CD8-positive, alpha-beta memory T cell (primary cell): ENCODE measurements at regions of chr12 and their contacts with region 1.

Region 1: GRCh38 chr12:69879041-69879960 is 54.3 kb downstream of the MYRFL start:
- DNase-seq: peak; percentile 37 to 67 (median 39)
- H3K4me3 ChIP-seq: no peak overlapping the region
- H3K4me3 Mint-ChIP-seq: no peak overlapping the region
- H3K27ac ChIP-seq: no peak overlapping the region
- H3K27ac Mint-ChIP-seq: peak overlapping the region in 2 of 8 donors; percentile 28 to 36
- H3K4me1 ChIP-seq: no peaks in the 10 kb centered on the region
- H3K4me1 Mint-ChIP-seq: peaks cover 3 to 9% (median 6%) of the 10 kb centered on the region in 3 donors
- H3K27me3 ChIP-seq: no peaks in the 10 kb centered on the region
- H3K27me3 Mint-ChIP-seq: peaks cover 11 to 44% of the 10 kb centered on the region in 2 donors

Region 2: GRCh38 chr12:69708649-69709048 is 170.7 kb before region 1 on chr12:
- CTCF ChIA-PET with region 1: no interaction called
- POLR2A ChIA-PET with region 1: no interaction called
- DNase-seq: no peak
- H3K4me3 ChIP-seq: no peak overlapping the region
- H3K4me3 Mint-ChIP-seq: no peak overlapping the region
- H3K27ac ChIP-seq: no peak overlapping the region
- H3K27ac Mint-ChIP-seq: no peak overlapping the region
- H3K4me1 ChIP-seq: no peaks in the 10 kb centered on the region
- H3K4me1 Mint-ChIP-seq: no peaks in the 10 kb centered on the region
- H3K27me3 ChIP-seq: no peaks in the 10 kb centered on the region
- H3K27me3 Mint-ChIP-seq: peaks cover 10 to 50% of the 10 kb centered on the region in 2 donors

Region 3: GRCh38 chr12:70576346-70577282 is 697.3 kb after region 1 on chr12:
- CTCF ChIA-PET with region 1: interaction called, 15 read pairs
- POLR2A ChIA-PET with region 1: no interaction called
- DNase-seq: peak in 2 of 5 donors; percentile 22 to 35
- H3K4me3 ChIP-seq: no peak overlapping the region
- H3K4me3 Mint-ChIP-seq: no peak overlapping the region
- H3K27ac ChIP-seq: no peak overlapping the region
- H3K27ac Mint-ChIP-seq: no peak overlapping the region
- H3K4me1 ChIP-seq: no peaks in the 10 kb centered on the region
- H3K4me1 Mint-ChIP-seq: no peaks in the 10 kb centered on the region
- H3K27me3 ChIP-seq: no peaks in the 10 kb centered on the region
- H3K27me3 Mint-ChIP-seq: peaks cover 5 to 9% of the 10 kb centered on the region in 2 donors

Region 4: GRCh38 chr12:70733385-70733784 is 854.1 kb after region 1 on chr12:
- CTCF ChIA-PET with region 1: interaction called, 12 read pairs
- POLR2A ChIA-PET with region 1: no interaction called
- DNase-seq: no peak
- H3K4me3 ChIP-seq: no peak overlapping the region
- H3K4me3 Mint-ChIP-seq: no peak overlapping the region
- H3K27ac ChIP-seq: no peak overlapping the region
- H3K27ac Mint-ChIP-seq: no peak overlapping the region
- H3K4me1 ChIP-seq: no peaks in the 10 kb centered on the region
- H3K4me1 Mint-ChIP-seq: no peaks in the 10 kb centered on the region
- H3K27me3 ChIP-seq: no peaks in the 10 kb centered on the region
- H3K27me3 Mint-ChIP-seq: peaks cover 3 to 5% of the 10 kb centered on the region in 2 donors